ENCODE measurements at regions of chr12 and their contacts with region 1.

Region 1: GRCh38 chr12:50174971-50175715 is 8.0 kb upstream of the CERS5 start:
- DNase-seq: no peak
- ATAC-seq: peak; percentile 34; the same call in 1 of the 3 replicates
- H3K4me3 ChIP-seq: no peak overlapping the region
- H3K27ac ChIP-seq: no peak overlapping the region
- H3K4me1 ChIP-seq: no peaks in the 10 kb centered on the region
- H3K27me3 ChIP-seq: no peaks in the 10 kb centered on the region
- CTCF ChIP-seq: peak; percentile 47 to 64 (median 53); a peak in 5 of 6 replicates
- EP300 ChIP-seq: no peak
- POLR2A ChIP-seq: no peak
- RAD21 ChIP-seq: peak; percentile 73

Region 2: GRCh38 chr12:50090391-50090790 is 84.8 kb before region 1 on chr12:
- CTCF ChIA-PET with region 1: interaction called, 97 read pairs
- POLR2A ChIA-PET with region 1: interaction called, 5 read pairs
- RAD21 ChIA-PET with region 1: interaction called, 8 read pairs
- SMC1A ChIA-PET with region 1: interaction called, 26 read pairs
- in situ Hi-C with region 1: loop called (anchors 5 kb)
- intact Hi-C with region 1: loop called (anchors 1 kb)
- DNase-seq: no peak
- ATAC-seq: no peak
- H3K4me3 ChIP-seq: no peak overlapping the region
- H3K27ac ChIP-seq: no peak overlapping the region
- H3K4me1 ChIP-seq: no peaks in the 10 kb centered on the region
- H3K27me3 ChIP-seq: no peaks in the 10 kb centered on the region
- CTCF ChIP-seq: no peak
- EP300 ChIP-seq: no peak
- POLR2A ChIP-seq: no peak
- RAD21 ChIP-seq: no peak

Region 3: GRCh38 chr12:50132505-50133135 is 42.5 kb before region 1 on chr12:
- CTCF ChIA-PET with region 1: interaction called, 18 read pairs
- POLR2A ChIA-PET with region 1: interaction called, 7 read pairs
- RAD21 ChIA-PET with region 1: interaction called, 7 read pairs
- SMC1A ChIA-PET with region 1: interaction called, 10 read pairs
- in situ Hi-C with region 1: no loop called
- intact Hi-C with region 1: loop called (anchors 2 kb)
- DNase-seq: no peak
- ATAC-seq: peak; percentile 51
- H3K4me3 ChIP-seq: no peak overlapping the region
- H3K27ac ChIP-seq: no peak overlapping the region
- H3K4me1 ChIP-seq: no peaks in the 10 kb centered on the region
- H3K27me3 ChIP-seq: no peaks in the 10 kb centered on the region
- CTCF ChIP-seq: peak; percentile 37 to 47 (median 46); a peak in 4 of 6 replicates
- EP300 ChIP-seq: no peak
- POLR2A ChIP-seq: no peak
- RAD21 ChIP-seq: peak; percentile 48

Region 4: DNA sequence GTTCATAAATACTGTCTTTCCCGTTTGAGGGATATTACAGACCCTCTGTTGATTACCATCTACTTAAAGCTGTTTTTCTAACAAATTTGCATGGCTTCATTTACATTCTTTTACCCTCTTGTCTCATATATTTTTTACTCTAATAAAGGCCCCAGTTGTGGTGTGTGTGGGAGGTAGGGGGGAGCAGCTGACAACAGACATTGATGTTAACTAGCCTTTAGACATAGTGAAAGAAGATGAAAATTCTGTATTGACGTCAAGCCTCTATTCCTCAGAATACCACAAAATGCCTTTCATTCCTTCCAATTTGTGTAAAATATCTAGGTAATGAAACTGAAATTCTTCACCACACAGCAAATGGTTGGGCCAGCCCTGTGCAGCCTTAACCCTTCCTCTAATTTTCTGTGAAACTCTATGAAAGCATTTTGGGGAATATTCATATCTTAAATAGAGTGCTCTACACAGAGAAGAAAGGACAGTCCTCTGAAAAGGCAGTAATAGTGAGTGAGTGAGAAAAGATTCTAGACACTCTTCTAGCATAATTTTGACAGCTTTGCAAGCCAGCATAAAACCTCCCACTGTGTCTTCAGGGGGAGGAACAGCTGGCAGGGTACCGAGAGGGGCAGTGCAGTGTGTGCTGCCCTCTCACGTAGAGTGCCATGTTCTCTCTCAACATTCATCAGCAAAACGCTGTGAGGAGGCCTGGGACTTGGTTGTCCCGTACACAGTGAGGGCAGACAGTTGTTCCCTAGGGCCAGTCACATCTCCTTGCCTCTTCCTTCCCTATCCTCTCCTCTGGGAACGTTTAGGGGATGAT is 12.1 kb after region 1 on chr12:
- CTCF ChIA-PET with region 1: interaction called, 21 read pairs
- POLR2A ChIA-PET with region 1: interaction called, 3 read pairs
- RAD21 ChIA-PET with region 1: interaction called, 6 read pairs
- SMC1A ChIA-PET with region 1: interaction called, 8 read pairs
- in situ Hi-C with region 1: no loop called
- intact Hi-C with region 1: no loop called
- DNase-seq: peak; percentile 47
- ATAC-seq: peak; percentile 91
- H3K4me3 ChIP-seq: no peak overlapping the region
- H3K27ac ChIP-seq: peak overlapping the region; percentile 64
- H3K4me1 ChIP-seq: peaks cover 28% of the 10 kb centered on the region
- H3K27me3 ChIP-seq: no peaks in the 10 kb centered on the region
- CTCF ChIP-seq: no peak
- EP300 ChIP-seq: peak; percentile 94 to 96; a peak in 3 of 4 replicates
- POLR2A ChIP-seq: no peak
- RAD21 ChIP-seq: 0 out of 2 replicates have a peak, but pooled peaks have one; percentile 6

Region 5: DNA sequence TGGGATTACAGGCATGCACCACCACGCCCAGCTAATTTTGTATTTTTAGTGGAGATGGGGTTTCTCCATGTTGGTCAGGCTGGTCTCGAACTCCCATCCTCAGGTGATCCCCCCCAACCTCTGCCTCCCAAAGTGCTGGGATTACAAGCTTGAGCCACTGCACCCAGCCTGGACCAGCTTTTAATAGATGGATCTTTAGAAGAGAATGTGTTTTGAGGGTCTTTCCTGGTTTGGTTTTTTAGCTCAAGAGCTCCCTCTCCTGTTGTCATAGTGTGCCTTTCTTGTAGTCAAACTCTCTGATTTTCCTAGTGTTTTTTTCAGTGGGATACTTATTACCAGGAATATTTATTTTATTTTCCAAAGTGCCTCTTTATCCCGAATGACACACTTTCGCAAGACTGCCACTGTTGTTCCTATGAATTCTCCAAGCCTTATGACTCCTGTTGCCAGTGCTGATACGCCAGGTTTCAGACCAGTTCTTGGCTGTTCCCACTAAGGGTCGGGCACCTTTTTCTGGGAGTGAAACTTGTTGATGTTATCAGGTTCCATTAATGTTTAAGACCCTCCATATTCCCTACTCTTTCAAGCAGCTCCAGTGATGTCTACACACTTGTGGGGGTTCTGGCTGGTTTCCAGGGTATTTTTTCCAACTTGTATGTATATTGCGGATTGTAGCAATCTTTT is 139.6 kb after region 1 on chr12:
- CTCF ChIA-PET with region 1: interaction called, 61 read pairs
- POLR2A ChIA-PET with region 1: no interaction called
- RAD21 ChIA-PET with region 1: interaction called, 18 read pairs
- SMC1A ChIA-PET with region 1: interaction called, 10 read pairs
- in situ Hi-C with region 1: loop called (anchors 5 kb)
- intact Hi-C with region 1: no loop called
- DNase-seq: no peak
- ATAC-seq: peak; percentile 62
- H3K4me3 ChIP-seq: no peak overlapping the region
- H3K27ac ChIP-seq: no peak overlapping the region
- H3K4me1 ChIP-seq: no peaks in the 10 kb centered on the region
- H3K27me3 ChIP-seq: no peaks in the 10 kb centered on the region
- CTCF ChIP-seq: peak; percentile 44 to 63 (median 51); a peak in 5 of 6 replicates
- EP300 ChIP-seq: no peak
- POLR2A ChIP-seq: no peak
- RAD21 ChIP-seq: peak; percentile 83

Measured in GM12878 (cell line).